ENCODE measurements at regions of chr4 and their contacts with region 1.

Region 1: GRCh38 chr4:109702950-109703663 is at the start of gene CASP6:
- DNase-seq: peak; percentile 72 to 83 (median 77)
- H3K4me3 ChIP-seq: peak within 1 kb of the TSS; percentile 48 to 56
- H3K4me3 Mint-ChIP-seq: peak within 1 kb of the TSS; percentile 92 to 98 (median 95)
- H3K27ac ChIP-seq: peak within 1 kb of the TSS; percentile 71
- H3K27ac Mint-ChIP-seq: peak within 1 kb of the TSS; percentile 86 to 96 (median 93)
- H3K4me1 ChIP-seq: peaks cover 47% of the 10 kb centered on the region
- H3K4me1 Mint-ChIP-seq: peaks cover 31 to 60% (median 42%) of the 10 kb centered on the region in 4 donors
- H3K27me3 ChIP-seq: no peaks in the 10 kb centered on the region
- H3K27me3 Mint-ChIP-seq: no peaks in the 10 kb centered on the region
- total RNA-seq, gene CASP6: 16.5 to 24.7 TPM

Region 2: DNA sequence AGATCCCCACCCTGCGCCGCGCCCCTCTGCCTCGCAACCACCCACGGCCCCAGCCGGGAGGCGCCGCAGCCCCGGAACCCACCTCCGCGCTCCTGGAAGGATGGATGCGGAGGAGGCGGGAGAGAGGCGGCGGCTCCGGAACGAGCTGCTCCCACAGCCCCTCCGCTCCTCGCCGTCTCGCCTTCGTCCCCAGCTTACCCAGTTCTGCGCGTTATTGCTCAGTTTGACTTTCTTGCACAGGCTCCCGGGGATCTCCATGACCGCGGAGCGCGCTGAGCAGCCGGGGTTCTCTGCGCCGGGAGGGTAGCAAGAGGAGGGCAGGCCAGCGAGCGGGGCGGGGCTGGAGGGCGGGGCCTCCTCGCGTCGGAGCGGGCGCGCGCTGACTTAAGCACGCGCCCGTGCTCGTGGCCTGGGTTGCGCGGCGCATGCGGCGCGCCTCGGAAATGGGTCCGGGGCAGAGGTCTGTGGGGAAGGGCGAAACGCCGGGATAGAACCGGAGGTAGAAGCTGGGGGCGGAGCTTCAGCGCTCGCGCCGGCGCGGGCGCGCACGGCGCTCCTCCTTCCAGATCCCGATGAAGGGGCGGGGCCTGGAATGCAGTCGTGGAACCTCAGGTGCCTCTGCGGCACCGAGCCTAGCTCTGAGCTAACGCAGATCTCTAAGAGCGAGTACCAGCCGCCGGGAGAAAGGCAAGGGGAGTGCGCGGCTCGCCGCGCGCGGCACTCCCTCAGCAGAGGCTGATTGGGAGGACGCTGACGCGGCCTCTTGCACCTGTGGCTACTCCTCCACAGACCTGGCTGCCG is 1983.0 kb before region 1 on chr4 and contains the start of gene PAPSS1:
- CTCF ChIA-PET with region 1: no interaction called
- POLR2A ChIA-PET with region 1: no interaction called
- intact Hi-C with region 1: loop called (anchors 5 kb)
- DNase-seq: peak; percentile 95 to 96 (median 96)
- H3K4me3 ChIP-seq: peak within 1 kb of the TSS; percentile 53 to 94
- H3K4me3 Mint-ChIP-seq: peak within 1 kb of the TSS; percentile 91 to 98 (median 96)
- H3K27ac ChIP-seq: peak within 1 kb of the TSS; percentile 73
- H3K27ac Mint-ChIP-seq: peak within 1 kb of the TSS; percentile 91 to 98 (median 94)
- H3K4me1 ChIP-seq: peaks cover 25% of the 10 kb centered on the region
- H3K4me1 Mint-ChIP-seq: peaks cover 27 to 45% (median 34%) of the 10 kb centered on the region in 4 donors
- H3K27me3 ChIP-seq: no peaks in the 10 kb centered on the region
- H3K27me3 Mint-ChIP-seq: no peaks in the 10 kb centered on the region
- total RNA-seq, gene PAPSS1: 23.0 to 23.1 TPM

Region 3: GRCh38 chr4:109559983-109560686 is 143.0 kb before region 1 on chr4 and contains the start of gene MCUB:
- CTCF ChIA-PET with region 1: interaction called, 17 read pairs
- POLR2A ChIA-PET with region 1: interaction called, 23 read pairs
- intact Hi-C with region 1: loop called (anchors 1 kb)
- DNase-seq: peak; percentile 93 to 95 (median 94)
- H3K4me3 ChIP-seq: peak within 1 kb of the TSS; percentile 92 to 98
- H3K4me3 Mint-ChIP-seq: peak within 1 kb of the TSS; percentile 95 to 99 (median 98)
- H3K27ac ChIP-seq: peak within 1 kb of the TSS; percentile 96
- H3K27ac Mint-ChIP-seq: peak within 1 kb of the TSS; percentile 91 to 99 (median 98)
- H3K4me1 ChIP-seq: peaks cover 54% of the 10 kb centered on the region
- H3K4me1 Mint-ChIP-seq: peaks cover 38 to 66% (median 54%) of the 10 kb centered on the region in 4 donors
- H3K27me3 ChIP-seq: no peaks in the 10 kb centered on the region
- H3K27me3 Mint-ChIP-seq: no peaks in the 10 kb centered on the region
- total RNA-seq, gene MCUB: 142 to 146 TPM

Region 4: DNA sequence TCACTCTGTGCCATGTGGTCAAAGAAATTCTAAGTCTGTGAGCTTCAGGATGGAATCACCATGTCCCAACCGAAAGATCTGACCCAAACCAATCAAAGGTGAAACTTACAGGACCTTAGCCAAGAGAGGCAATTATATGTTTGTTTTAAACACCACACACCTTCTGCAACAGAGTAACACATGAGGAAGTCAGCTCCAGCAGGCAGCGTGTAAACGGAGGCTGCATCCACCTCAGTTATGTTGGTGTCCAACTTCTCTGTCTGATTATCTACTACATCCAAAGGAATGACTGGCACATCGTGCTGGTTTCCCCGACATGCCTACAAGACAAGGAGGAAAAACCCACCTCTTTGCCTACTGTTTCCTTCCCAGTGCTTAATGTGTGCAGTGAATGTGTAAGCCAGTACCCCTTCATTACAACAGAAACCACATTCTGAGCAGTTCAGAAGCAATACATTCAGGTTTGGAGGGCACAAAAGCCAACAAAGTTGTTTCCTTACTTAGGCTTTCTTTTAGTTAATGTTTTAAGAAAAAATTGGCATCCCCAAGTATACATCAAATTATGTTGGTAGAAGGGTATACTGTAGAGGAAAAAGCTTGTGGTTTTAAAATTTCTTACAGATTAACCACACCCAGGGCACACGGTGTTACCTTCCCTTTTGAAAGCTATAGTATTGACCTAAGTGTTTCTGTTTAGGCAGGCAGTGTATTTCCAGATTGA is 12.3 kb before region 1 on chr4:
- CTCF ChIA-PET with region 1: interaction called, 9 read pairs
- POLR2A ChIA-PET with region 1: interaction called, 20 read pairs
- intact Hi-C with region 1: loop called (anchors 1 kb)
- DNase-seq: peak in 4 of 5 donors; percentile 36 to 54 (median 46)
- H3K4me3 ChIP-seq: no peak overlapping the region
- H3K4me3 Mint-ChIP-seq: peak overlapping the region; percentile 43 to 83 (median 74)
- H3K27ac ChIP-seq: peak overlapping the region; percentile 7
- H3K27ac Mint-ChIP-seq: peak overlapping the region; percentile 79 to 93 (median 86)
- H3K4me1 ChIP-seq: peaks cover 24% of the 10 kb centered on the region
- H3K4me1 Mint-ChIP-seq: peaks cover 26 to 46% (median 36%) of the 10 kb centered on the region in 4 donors
- H3K27me3 ChIP-seq: no peaks in the 10 kb centered on the region
- H3K27me3 Mint-ChIP-seq: no peaks in the 10 kb centered on the region

Region 5: GRCh38 chr4:109815151-109816081 is 112.3 kb after region 1 on chr4 and contains the start of gene GAR1:
- CTCF ChIA-PET with region 1: no interaction called
- POLR2A ChIA-PET with region 1: interaction called, 9 read pairs
- intact Hi-C with region 1: loop called (anchors 1 kb)
- DNase-seq: peak; percentile 85 to 93 (median 87)
- H3K4me3 ChIP-seq: peak within 1 kb of the TSS; percentile 98 to 100
- H3K4me3 Mint-ChIP-seq: peak within 1 kb of the TSS; percentile 97 to 99 (median 98)
- H3K27ac ChIP-seq: peak within 1 kb of the TSS; percentile 93
- H3K27ac Mint-ChIP-seq: peak within 1 kb of the TSS; percentile 97 to 99 (median 99)
- H3K4me1 ChIP-seq: peaks cover 22% of the 10 kb centered on the region
- H3K4me1 Mint-ChIP-seq: peaks cover 27 to 44% (median 36%) of the 10 kb centered on the region in 4 donors
- H3K27me3 ChIP-seq: no peaks in the 10 kb centered on the region
- H3K27me3 Mint-ChIP-seq: no peaks in the 10 kb centered on the region
- total RNA-seq, gene GAR1: 13.7 to 14.1 TPM

Region 6: DNA sequence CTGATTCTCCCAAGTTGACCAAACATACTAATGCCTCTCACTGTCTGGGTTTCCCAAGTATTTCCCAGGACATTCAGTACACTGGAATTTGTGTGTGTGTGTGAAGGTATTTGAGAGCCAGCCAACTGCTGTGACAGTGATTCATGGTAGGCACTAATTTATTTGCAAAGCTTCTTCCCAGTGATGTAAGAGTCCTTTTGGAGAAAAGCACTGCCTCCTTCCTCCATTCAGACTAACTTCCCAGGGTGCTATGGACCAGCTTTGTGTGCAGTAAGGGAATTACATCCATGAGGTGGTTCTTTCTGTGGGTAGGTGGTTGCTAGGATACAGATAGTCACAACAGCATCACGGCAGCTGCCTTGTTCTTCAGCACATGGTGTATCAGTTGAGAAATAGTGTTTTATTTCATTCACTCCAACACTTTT is 218.3 kb after region 1 on chr4:
- CTCF ChIA-PET with region 1: no interaction called
- POLR2A ChIA-PET with region 1: no interaction called
- intact Hi-C with region 1: no loop called
- DNase-seq: no peak
- H3K4me3 ChIP-seq: no peak overlapping the region
- H3K4me3 Mint-ChIP-seq: no peak overlapping the region
- H3K27ac ChIP-seq: no peak overlapping the region
- H3K27ac Mint-ChIP-seq: no peak overlapping the region
- H3K4me1 ChIP-seq: no peaks in the 10 kb centered on the region
- H3K4me1 Mint-ChIP-seq: peaks cover 0 to 4% (median 3%) of the 10 kb centered on the region in 4 donors
- H3K27me3 ChIP-seq: no peaks in the 10 kb centered on the region
- H3K27me3 Mint-ChIP-seq: peaks cover 2% of the 10 kb centered on the region in 2 donors

Region 7: GRCh38 chr4:109977854-109978501 is 274.9 kb after region 1 on chr4:
- CTCF ChIA-PET with region 1: no interaction called
- POLR2A ChIA-PET with region 1: no interaction called
- intact Hi-C with region 1: loop called (anchors 10 kb)
- DNase-seq: peak in 4 of 5 donors; percentile 18 to 26 (median 22)
- H3K4me3 ChIP-seq: no peak overlapping the region
- H3K4me3 Mint-ChIP-seq: no peak overlapping the region
- H3K27ac ChIP-seq: no peak overlapping the region
- H3K27ac Mint-ChIP-seq: no peak overlapping the region
- H3K4me1 ChIP-seq: no peaks in the 10 kb centered on the region
- H3K4me1 Mint-ChIP-seq: no peaks in the 10 kb centered on the region
- H3K27me3 ChIP-seq: no peaks in the 10 kb centered on the region
- H3K27me3 Mint-ChIP-seq: peaks cover 14 to 24% of the 10 kb centered on the region in 2 donors

Measured in CD4-positive, alpha-beta memory T cell (primary cell).